ENCODE measurements at regions of chr4 and their contacts with region 1.

Region 1: DNA sequence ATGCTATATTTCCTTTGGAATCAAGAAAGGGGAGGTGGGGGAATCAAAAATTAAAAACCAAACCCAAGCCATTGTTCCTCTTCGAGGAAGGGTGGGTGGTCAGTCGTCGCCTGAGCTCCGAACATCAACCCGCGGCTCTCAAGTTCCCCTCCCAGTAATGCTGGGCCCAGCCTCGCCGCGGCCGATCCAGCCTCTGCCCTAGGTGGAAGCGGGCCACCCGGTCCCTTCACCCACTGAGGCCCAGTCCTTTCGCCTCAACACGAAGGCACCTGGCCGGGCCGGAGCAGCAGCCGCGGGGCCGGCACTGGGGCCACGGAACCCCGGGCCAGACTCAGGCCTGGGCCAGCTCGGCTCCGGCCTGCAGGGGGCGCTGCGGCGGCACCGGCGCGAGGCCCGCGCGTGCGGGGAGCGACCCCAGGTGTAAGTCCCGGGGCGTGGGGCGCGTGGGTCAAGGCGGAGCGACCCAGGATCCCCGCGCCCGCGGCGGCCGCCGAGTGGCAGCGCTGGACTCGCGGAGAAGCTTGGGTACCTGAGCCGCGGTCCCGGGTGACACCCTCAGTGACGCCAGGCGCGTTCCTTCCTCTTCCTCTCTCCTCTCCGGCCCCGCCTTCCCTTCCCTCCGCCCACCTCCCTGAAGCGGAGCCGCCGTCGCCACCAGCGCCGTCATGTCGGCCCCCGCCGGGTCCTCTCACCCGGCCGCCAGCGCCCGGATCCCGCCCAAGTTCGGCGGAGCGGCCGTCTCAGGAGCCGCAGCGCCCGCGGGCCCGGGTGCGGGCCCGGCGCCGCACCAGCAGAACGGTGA is at the start of gene SEC24B:
- DNase-seq: peak; percentile 91
- ATAC-seq: peak; percentile 91
- H3K4me3 Mint-ChIP-seq: peak within 1 kb of the TSS; percentile 86
- H3K27ac Mint-ChIP-seq: peak within 1 kb of the TSS; percentile 79
- H3K4me1 Mint-ChIP-seq: peaks cover 46% of the 10 kb centered on the region
- H3K27me3 Mint-ChIP-seq: no peaks in the 10 kb centered on the region
- CTCF ChIP-seq: no peak
- total RNA-seq, gene SEC24B: 32.0 and 36.1 TPM in 2 replicates

Region 2: DNA sequence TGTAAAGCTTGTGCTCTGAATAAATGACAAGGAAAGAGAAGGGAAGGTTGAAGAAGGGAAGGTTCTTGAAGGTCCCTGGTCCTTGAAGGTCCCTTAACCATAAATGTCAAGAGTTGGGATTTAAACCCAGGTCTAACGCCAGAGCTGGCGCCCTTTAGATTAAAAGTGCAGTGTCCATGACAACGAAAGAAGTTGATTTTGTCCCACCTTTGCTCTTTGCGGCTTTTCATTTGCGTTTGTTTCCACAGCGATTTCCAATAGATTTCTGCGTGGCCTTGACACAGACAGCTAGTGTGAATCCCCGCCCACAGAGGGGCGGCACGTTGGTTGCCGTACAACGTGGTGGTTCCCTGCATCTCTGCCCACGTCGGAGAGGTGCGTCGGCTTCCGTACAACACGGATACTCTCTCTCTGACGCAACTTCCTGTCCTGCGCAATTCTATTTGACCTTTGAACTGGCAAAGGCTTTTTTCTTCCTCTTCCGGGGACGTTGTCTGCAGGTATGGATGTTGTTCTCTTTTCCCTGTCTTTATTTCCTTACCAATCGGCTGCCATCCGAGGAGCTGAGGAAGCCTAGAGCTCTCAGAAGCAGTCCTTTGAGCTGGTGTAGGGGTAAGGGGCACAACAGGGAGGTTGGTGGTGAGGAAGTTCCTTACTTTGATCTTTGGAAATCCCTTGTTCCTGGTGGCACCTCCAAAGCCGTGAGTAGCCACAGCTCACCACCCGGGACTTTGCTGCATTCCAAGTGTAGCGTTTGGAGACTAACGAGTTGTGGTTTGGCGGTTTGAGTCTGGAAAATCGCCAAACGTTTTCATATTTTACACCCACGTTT is 813.1 kb before region 1 on chr4 and contains the start of gene RPL34:
- CTCF ChIA-PET with region 1: no interaction called
- POLR2A ChIA-PET with region 1: no interaction called
- intact Hi-C with region 1: loop called (anchors 5 kb)
- DNase-seq: peak; percentile 83
- ATAC-seq: peak; percentile 100
- H3K4me3 Mint-ChIP-seq: peak within 1 kb of the TSS; percentile 95
- H3K27ac Mint-ChIP-seq: peak within 1 kb of the TSS; percentile 95
- H3K4me1 Mint-ChIP-seq: peaks cover 50% of the 10 kb centered on the region
- H3K27me3 Mint-ChIP-seq: no peaks in the 10 kb centered on the region
- CTCF ChIP-seq: no peak
- total RNA-seq, gene RPL34: 2,310 and 2,662 TPM in 2 replicates

Region 3: DNA sequence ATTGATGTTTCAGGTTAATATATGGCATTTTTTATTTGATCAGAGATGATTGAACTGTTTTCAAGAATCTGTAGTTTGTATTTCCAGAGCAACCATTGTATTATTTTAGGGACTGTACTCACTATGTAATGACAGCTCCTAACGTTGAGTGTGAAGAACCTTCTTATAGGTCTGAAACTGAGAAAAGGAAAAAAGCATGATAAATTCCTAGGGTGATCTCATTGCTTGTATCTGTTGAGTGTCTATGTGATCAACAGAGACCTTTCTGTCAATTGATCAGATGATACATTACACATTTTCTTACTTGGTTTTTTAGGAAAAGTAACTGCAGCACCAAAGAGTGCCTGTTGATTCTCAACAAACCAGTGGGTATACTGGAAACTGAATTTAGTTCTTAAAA is 40.4 kb after region 1 on chr4:
- CTCF ChIA-PET with region 1: no interaction called
- POLR2A ChIA-PET with region 1: no interaction called
- intact Hi-C with region 1: loop called (anchors 2 kb)
- DNase-seq: no peak
- ATAC-seq: no peak
- H3K4me3 Mint-ChIP-seq: no peak overlapping the region
- H3K27ac Mint-ChIP-seq: no peak overlapping the region
- H3K4me1 Mint-ChIP-seq: peaks cover 25% of the 10 kb centered on the region
- H3K27me3 Mint-ChIP-seq: no peaks in the 10 kb centered on the region
- CTCF ChIP-seq: no peak

Region 4: GRCh38 chr4:109559983-109560686 is 126.7 kb after region 1 on chr4 and contains the start of gene MCUB:
- CTCF ChIA-PET with region 1: interaction called, 4 read pairs
- POLR2A ChIA-PET with region 1: interaction called, 41 read pairs
- intact Hi-C with region 1: loop called (anchors 1 kb)
- DNase-seq: peak; percentile 75
- ATAC-seq: peak; percentile 84
- H3K4me3 Mint-ChIP-seq: peak within 1 kb of the TSS; percentile 93
- H3K27ac Mint-ChIP-seq: peak within 1 kb of the TSS; percentile 97
- H3K4me1 Mint-ChIP-seq: peaks cover 49% of the 10 kb centered on the region
- H3K27me3 Mint-ChIP-seq: no peaks in the 10 kb centered on the region
- CTCF ChIP-seq: no peak
- total RNA-seq, gene MCUB: 28.9 and 34.4 TPM in 2 replicates

Region 5: GRCh38 chr4:109588176-109588575 is 154.8 kb after region 1 on chr4:
- CTCF ChIA-PET with region 1: no interaction called
- POLR2A ChIA-PET with region 1: no interaction called
- intact Hi-C with region 1: no loop called
- DNase-seq: no peak
- ATAC-seq: peak; percentile 72
- H3K4me3 Mint-ChIP-seq: no peak overlapping the region
- H3K27ac Mint-ChIP-seq: peak overlapping the region; percentile 59
- H3K4me1 Mint-ChIP-seq: peaks cover 58% of the 10 kb centered on the region
- H3K27me3 Mint-ChIP-seq: no peaks in the 10 kb centered on the region
- CTCF ChIP-seq: no peak

Region 6: DNA sequence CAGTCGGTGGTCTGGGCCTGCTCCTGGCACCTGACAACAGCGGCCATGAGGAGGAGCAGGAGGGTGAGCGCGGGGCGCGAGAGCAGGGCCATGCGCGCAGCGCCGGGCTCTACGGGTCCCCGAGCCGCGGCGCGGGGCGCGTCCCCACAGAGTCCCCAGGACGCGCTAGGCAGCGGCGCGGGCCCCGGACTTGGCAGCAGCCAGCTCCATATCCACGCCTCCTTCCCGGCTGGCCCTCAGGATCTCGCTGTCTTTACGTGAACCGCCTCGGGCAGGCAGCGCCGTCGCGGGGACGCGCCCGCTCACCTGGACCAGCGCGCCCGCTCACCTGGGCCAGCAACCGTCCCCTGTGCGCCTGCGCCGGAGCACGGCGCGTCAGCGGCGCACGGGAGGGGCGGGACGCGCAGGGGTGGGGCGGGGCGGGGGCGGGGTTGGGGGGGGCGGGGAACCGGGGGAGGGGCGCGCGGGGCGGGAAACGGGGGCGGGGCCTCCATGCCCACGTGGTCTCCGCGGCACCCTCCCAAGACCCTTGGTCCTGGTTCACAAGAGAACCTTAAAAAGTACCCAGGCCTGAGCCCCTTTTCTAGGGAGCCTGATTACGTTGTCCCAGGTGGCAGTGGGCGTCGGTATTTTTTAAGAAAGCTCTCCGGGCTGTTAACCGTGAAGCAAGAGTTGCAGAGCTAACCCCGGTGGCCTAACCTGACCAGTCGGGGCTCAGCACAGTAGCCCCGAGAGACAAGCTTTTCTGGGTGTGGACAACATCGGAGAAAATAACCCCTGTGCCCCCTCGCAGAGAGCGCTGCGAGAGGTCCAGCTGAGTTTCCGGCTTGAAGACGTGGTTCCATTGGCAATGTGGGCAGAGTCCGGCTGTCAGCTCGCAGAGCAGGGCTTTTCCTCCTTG is 296.6 kb after region 1 on chr4 and contains the start of gene PLA2G12A:
- CTCF ChIA-PET with region 1: no interaction called
- POLR2A ChIA-PET with region 1: interaction called, 9 read pairs
- intact Hi-C with region 1: loop called (anchors 1 kb)
- DNase-seq: peak; percentile 77
- ATAC-seq: peak; percentile 90
- H3K4me3 Mint-ChIP-seq: peak within 1 kb of the TSS; percentile 90
- H3K27ac Mint-ChIP-seq: peak within 1 kb of the TSS; percentile 79
- H3K4me1 Mint-ChIP-seq: peaks cover 12% of the 10 kb centered on the region
- H3K27me3 Mint-ChIP-seq: no peaks in the 10 kb centered on the region
- CTCF ChIP-seq: no peak
- total RNA-seq, gene PLA2G12A: 6.7 and 9.6 TPM in 2 replicates

Region 7: GRCh38 chr4:110193822-110194761 is 760.7 kb after region 1 on chr4:
- CTCF ChIA-PET with region 1: no interaction called
- POLR2A ChIA-PET with region 1: no interaction called
- intact Hi-C with region 1: loop called (anchors 1 kb)
- DNase-seq: peak; percentile 31
- ATAC-seq: peak; percentile 79
- H3K4me3 Mint-ChIP-seq: peak overlapping the region; percentile 51
- H3K27ac Mint-ChIP-seq: peak overlapping the region; percentile 62
- H3K4me1 Mint-ChIP-seq: peaks cover 24% of the 10 kb centered on the region
- H3K27me3 Mint-ChIP-seq: no peaks in the 10 kb centered on the region
- CTCF ChIP-seq: no peak